ENCODE measurements at regions of chr11 and their contacts with region 1.

Region 1: GRCh38 chr11:819129-819931 is 616 bp downstream of the PNPLA2 start:
- DNase-seq: peak; percentile 94
- CTCF ChIP-seq: no peak

Region 2: DNA sequence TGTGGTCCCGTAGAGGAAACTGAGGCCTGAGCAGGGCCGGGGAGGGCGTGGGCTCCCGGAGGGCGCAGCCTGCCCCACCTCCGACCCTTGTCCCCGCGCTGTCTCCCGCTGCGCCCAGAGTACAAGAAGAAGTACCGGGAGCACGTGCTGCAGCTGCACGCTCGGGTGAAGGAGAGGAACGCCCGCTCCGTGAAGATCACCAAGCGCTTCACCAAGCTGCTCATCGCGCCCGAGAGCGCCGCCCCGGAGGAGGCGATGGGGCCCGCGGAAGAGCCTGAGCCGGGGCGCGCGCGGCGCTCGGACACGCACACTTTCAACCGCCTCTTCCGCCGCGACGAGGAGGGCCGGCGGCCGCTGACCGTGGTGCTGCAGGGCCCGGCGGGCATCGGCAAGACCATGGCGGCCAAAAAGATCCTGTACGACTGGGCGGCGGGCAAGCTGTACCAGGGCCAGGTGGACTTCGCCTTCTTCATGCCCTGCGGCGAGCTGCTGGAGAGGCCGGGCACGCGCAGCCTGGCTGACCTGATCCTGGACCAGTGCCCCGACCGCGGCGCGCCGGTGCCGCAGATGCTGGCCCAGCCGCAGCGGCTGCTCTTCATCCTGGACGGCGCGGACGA is 539.3 kb before region 1 on chr11:
- CTCF ChIA-PET with region 1: no interaction called
- POLR2A ChIA-PET with region 1: no interaction called
- DNase-seq: no peak
- CTCF ChIP-seq: no peak

Region 3: GRCh38 chr11:832321-833113 is 13.2 kb after region 1 on chr11 and contains the start of gene CD151:
- CTCF ChIA-PET with region 1: interaction called, 11 read pairs
- POLR2A ChIA-PET with region 1: interaction called, 35 read pairs
- DNase-seq: peak; percentile 85
- CTCF ChIP-seq: no peak

Region 4: DNA sequence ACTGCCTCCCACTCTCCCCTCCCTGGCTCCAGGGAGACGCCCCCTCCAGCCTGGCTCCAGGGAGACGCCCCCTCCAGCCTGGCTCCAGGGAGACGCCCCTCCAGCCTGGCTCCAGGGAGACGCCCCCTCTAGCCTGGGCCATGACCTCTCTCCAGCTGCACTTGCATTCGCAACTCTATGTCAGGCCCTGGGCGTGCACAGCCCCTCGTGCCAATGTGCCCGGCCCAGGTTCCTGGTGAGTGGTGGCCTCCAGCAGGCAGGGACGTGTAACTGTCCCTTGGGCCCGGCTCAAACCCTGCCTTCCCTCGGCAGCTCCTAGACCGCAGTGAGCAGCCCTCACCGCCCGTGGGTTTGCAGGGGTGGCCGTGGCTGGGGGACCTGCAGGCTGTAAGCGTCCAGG is 210.3 kb after region 1 on chr11:
- CTCF ChIA-PET with region 1: no interaction called
- POLR2A ChIA-PET with region 1: no interaction called
- DNase-seq: no peak
- CTCF ChIP-seq: no peak